ENCODE measurements at regions of chr7 and their contacts with region 1.

Region 1: DNA sequence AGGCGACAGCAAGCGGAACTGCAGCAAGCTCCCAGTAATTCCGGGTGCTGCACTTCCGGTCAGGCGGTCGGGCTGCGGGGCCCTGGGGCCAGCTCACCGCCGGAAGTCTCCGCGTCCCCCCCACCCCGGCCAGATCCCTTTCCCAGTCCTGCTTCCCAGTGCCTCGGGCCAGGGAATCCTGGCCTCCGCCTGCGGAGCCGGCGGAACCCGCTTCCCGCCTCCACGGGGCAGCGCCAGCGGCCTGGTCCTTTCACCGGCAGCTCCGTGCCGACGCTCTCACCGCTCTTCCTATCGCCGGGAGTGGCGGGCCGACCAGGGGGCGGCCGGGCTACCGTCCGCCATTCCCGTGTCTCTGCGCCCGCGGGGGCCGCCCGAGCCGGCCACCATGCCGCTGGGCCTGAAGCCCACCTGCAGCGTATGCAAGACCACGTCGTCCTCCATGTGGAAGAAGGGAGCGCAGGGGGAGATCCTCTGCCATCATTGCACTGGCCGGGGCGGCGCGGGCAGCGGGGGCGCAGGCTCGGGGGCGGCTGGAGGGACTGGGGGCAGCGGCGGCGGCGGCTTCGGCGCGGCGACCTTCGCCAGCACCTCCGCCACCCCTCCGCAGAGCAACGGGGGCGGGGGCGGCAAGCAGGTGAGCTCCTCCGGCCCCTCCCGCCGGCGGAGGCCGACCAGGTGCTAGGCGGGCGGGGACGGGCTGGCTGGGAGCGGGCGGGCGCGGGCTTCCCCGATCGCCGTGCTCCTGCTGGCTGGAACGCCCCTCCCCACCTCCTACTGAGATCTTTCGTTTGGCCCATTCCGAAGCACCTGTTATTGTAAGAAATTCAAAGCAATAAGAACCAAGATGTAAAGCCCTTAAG is at the start of gene GATAD1:
- DNase-seq: peak; percentile 93 to 97 (median 96)
- ATAC-seq: peak; percentile 99
- H3K4me3 ChIP-seq: peak within 1 kb of the TSS; percentile 80
- H3K27ac ChIP-seq: peak within 1 kb of the TSS; percentile 92
- H3K4me1 ChIP-seq: no peaks in the 10 kb centered on the region
- H3K27me3 ChIP-seq: no peaks in the 10 kb centered on the region
- total RNA-seq, gene GATAD1: 18.0 to 21.5 (median 18.2) TPM

Region 2: DNA sequence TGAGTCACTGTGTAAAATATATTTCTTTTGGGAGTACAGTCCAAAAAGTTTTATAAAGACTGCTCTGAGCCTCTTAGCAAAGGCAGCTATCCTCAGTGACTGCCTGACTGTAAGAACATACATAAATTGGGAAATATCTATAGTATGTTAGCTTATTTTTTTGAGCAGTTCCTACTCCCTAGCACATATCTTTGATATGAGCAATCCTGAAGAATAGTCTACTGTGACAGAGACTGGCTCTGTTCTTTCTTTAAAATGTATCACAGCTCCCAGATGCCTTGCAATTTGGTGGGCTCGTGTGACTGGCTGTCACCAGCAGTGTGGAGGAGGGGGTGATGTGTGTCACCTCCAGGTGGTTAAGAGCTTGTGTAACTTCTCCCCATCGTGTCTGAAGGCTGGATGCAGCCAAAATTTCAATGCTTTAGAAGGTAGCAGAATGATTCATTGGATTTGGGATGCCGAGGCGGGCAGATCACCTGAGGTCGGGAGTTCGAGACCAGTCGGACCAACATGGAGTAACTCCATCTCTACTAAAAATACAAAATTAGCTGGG is 615.0 kb before region 1 on chr7:
- intact Hi-C with region 1: loop called in 1 of 4 experiments (anchors 5 kb)
- DNase-seq: no peak
- ATAC-seq: no peak
- H3K4me3 ChIP-seq: no peak overlapping the region
- H3K27ac ChIP-seq: no peak overlapping the region
- H3K4me1 ChIP-seq: no peaks in the 10 kb centered on the region
- H3K27me3 ChIP-seq: no peaks in the 10 kb centered on the region

Region 3: GRCh38 chr7:92496876-92497275 is 49.3 kb after region 1 on chr7:
- intact Hi-C with region 1: no loop called
- DNase-seq: no peak
- ATAC-seq: no peak
- H3K4me3 ChIP-seq: no peak overlapping the region
- H3K27ac ChIP-seq: no peak overlapping the region
- H3K4me1 ChIP-seq: peaks cover 1% of the 10 kb centered on the region
- H3K27me3 ChIP-seq: no peaks in the 10 kb centered on the region